Heart right ventricle (tissue), 16 donors: ENCODE measurements at regions of chr5 and their contacts with region 1.

Region 1: GRCh38 chr5:32254881-32255539 is 57.7 kb downstream of the MTMR12 start:
- DNase-seq: no peak
- ATAC-seq: peak; percentile 29 to 93 (median 59)
- H3K4me3 ChIP-seq: no peak overlapping the region
- H3K27ac ChIP-seq: peak overlapping the region in 5 of 10 donors; percentile 4 to 54 (median 47)
- H3K4me1 ChIP-seq: peaks cover 3 to 23% (median 8%) of the 10 kb centered on the region in 9 donors
- H3K27me3 ChIP-seq: no peaks in the 10 kb centered on the region
- CTCF ChIP-seq: no peak

Region 2: DNA sequence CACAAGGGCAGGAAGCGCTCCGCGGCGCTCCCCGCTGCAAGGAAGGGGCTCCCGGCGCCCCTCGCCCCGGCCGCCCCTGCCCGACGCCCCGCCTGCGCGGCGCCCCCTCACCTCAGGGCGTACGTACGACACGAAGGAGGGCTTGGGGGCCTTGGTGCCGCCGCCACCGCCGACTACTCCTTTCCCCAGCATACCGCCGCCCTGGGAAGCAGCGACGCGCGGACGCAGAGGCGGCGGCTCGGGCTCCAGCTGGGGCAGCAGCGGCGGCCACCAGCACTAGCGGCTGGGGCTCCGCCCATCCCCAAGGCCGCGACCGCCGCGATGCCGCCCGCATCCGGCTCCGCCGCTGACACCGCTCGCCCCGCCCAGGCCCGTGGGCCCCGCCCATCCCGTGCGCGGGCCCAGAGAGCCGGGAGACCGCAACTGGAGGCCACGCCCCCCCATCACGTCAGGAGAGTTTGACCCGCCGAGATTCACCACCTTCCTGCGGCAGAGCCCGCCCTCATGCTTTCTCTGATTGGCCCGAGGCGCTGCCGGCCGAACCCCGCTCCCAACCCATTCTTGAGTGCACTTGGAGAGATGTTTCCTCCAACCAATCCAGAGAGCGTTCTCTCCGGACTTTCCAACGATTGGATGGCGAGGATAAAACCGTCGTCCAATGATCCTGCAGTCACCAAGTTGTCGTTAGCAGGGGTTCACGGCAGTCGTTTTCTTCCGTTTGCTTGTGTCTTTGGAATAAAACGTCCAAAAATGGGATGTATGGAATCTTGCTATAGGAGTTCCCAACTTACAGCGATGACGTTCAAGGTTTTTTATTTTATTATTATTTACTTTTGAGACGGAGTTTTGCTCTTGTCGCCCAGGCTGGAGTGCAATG is 57.9 kb after region 1 on chr5 and contains the start of gene MTMR12:
- intact Hi-C with region 1: loop called in 1 of 10 experiments (anchors 10 kb)
- DNase-seq: peak; percentile 100
- ATAC-seq: peak; percentile 97 to 99 (median 98)
- H3K4me3 ChIP-seq: peak within 1 kb of the TSS; percentile 65 to 96 (median 88)
- H3K27ac ChIP-seq: peak within 1 kb of the TSS; percentile 94 to 99 (median 98)
- H3K4me1 ChIP-seq: peaks cover 0 to 46% (median 37%) of the 10 kb centered on the region in 9 donors
- H3K27me3 ChIP-seq: no peaks in the 10 kb centered on the region
- CTCF ChIP-seq: peak in 1 of 9 donors; percentile 18
- total RNA-seq, gene MTMR12: 15.4 to 27.2 (median 19.9) TPM